Left ventricle myocardium inferior (tissue), 1 donor: ENCODE measurements at regions of chr1 and their contacts with region 1.

Region 1: DNA sequence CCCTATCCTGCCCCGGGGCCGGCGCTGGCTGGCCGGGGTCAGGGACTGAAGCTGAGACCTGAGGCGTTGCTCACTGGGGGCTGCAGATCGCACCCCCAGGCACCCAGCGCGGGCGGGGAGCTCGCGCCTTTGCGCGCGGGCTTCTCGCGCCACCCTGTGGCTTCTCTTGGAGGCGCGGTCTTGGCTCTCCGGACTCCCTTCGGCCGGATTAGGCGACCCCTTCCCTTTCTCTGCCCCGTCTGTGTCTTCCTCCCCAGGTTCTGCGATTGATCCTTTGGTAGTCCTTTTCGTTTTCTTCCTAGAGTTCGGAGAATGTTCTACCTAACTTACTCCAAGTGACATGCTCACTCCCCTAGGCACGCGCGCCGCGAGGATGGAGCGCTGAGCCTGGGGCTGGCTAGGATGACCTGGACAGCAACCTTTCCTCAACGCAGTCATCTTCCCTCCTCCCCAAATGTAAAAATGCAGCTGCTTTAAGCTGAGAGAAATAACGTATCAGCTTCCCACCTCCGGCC is 495 bp upstream of the NTRK1 start:
- DNase-seq: peak; percentile 36
- H3K4me3 ChIP-seq: peak overlapping the region; percentile 63
- H3K27ac ChIP-seq: no peak overlapping the region
- H3K4me1 ChIP-seq: peaks cover 39% of the 10 kb centered on the region
- H3K27me3 ChIP-seq: peaks cover 85% of the 10 kb centered on the region
- CTCF ChIP-seq: peak; percentile 91

Region 2: GRCh38 chr1:156797212-156797871 is 62.8 kb before region 1 on chr1:
- intact Hi-C with region 1: loop called (anchors 10 kb)
- DNase-seq: no peak
- H3K4me3 ChIP-seq: no peak overlapping the region
- H3K27ac ChIP-seq: no peak overlapping the region
- H3K4me1 ChIP-seq: peaks cover 24% of the 10 kb centered on the region
- H3K27me3 ChIP-seq: no peaks in the 10 kb centered on the region
- CTCF ChIP-seq: peak; percentile 75